GM18951 (cell line): ENCODE measurements at regions of chrX and their contacts with region 1.

Region 1: GRCh38 chrX:1657367-1658070 is 42.7 kb downstream of the ASMT start:
- POLR2A ChIP-seq: peak; percentile 66

Region 2: GRCh38 chrX:2188330-2188792 is 530.8 kb after region 1 on chrX:
- in situ Hi-C with region 1: loop called (anchors 25 kb)
- POLR2A ChIP-seq: no peak

Region 3: DNA sequence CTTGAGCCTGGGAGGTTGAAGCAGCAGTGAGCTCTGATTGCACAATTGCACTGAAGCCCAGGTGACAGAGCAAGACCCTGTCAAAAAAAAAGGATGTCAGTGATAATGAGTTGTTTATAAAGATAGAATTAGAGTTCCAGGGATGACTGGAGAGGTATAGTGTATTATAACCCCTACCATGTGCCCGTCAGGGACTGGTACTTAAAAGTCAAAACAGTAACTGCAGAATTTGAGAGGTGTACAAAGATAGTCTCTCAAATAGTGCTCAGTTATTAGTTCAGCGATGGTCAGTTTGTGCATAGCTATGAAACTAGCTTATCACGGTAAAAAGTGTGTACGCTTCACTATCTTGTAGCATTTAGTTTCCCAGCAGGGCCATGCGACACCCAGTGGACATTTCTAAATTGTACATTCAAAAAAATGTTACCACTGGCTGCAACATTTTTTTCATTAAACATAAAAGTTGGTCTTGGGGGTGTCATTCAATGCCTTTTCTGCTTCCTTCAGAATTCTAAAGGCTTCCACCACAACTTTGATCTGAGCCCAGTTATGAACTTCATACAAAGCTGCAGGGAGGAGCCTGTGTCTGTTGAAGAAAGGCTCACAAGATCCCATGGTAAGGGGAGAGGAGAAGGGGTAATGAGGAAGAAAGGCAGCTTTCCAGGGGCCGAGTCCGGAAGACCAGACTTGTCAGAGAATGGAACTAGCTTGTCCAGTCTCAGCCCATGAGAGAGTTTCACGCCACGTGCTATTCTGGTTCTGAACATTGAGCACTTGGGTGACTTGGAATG is 1162.0 kb after region 1 on chrX:
- in situ Hi-C with region 1: loop called (anchors 25 kb)
- POLR2A ChIP-seq: no peak